Activated CD4-positive, alpha-beta memory T cell treated with anti-CD3 and anti-CD28 coated beads for 36 hours (primary cell): ENCODE measurements at regions of chr9 and their contacts with region 1.

Region 1: GRCh38 chr9:110623462-110624025 is 44.0 kb upstream of the SVEP1 start:
- DNase-seq: no peak
- H3K4me3 Mint-ChIP-seq: no peak overlapping the region
- H3K27ac Mint-ChIP-seq: no peak overlapping the region
- H3K4me1 Mint-ChIP-seq: peaks cover 11% of the 10 kb centered on the region
- H3K27me3 Mint-ChIP-seq: no peaks in the 10 kb centered on the region

Region 2: DNA sequence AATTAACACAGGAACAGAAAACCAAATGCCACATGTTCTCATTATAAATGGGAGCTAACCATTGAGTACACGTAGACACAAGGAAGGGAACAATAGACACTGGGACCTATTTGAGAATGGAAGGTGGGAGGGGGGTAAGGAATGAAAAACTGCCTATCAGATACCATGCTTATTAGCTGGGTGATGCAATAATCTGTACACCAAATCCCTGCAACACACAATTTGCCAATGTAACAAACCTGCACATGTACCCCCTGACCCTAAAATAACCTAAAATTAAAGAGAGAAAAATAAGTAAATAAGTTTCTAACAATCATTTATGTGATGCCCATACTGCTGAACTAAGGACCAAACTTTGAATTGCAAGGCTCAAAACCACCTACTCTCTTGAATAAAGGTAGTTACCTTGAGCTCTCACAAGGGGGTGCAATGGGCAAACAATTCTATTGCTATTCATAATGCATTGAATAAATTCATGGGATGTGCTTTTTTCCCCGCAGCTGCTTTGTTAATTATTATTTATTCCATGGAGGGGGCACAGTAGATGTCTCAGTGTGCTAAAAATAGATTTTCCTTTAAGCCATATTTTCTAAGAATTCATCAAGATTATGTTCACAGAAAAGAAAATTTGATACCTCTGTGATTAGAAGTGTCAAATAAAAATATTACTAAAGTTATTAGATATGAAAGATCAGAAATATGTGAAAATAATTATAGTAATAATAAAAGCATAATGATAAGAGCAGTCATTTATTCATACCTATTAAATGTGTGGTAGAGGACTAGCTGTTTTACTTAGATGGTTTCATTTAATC is 1049.3 kb before region 1 on chr9:
- CTCF ChIA-PET with region 1: no interaction called
- POLR2A ChIA-PET with region 1: no interaction called
- intact Hi-C with region 1: loop called (anchors 10 kb)
- DNase-seq: no peak
- H3K4me3 Mint-ChIP-seq: no peak overlapping the region
- H3K27ac Mint-ChIP-seq: no peak overlapping the region
- H3K4me1 Mint-ChIP-seq: no peaks in the 10 kb centered on the region
- H3K27me3 Mint-ChIP-seq: no peaks in the 10 kb centered on the region

Region 3: GRCh38 chr9:110183208-110184145 is 440.1 kb before region 1 on chr9:
- CTCF ChIA-PET with region 1: interaction called, 33 read pairs
- POLR2A ChIA-PET with region 1: no interaction called
- intact Hi-C with region 1: loop called (anchors 1 kb)
- DNase-seq: peak; percentile 67
- H3K4me3 Mint-ChIP-seq: no peak overlapping the region
- H3K27ac Mint-ChIP-seq: no peak overlapping the region
- H3K4me1 Mint-ChIP-seq: no peaks in the 10 kb centered on the region
- H3K27me3 Mint-ChIP-seq: no peaks in the 10 kb centered on the region

Region 4: DNA sequence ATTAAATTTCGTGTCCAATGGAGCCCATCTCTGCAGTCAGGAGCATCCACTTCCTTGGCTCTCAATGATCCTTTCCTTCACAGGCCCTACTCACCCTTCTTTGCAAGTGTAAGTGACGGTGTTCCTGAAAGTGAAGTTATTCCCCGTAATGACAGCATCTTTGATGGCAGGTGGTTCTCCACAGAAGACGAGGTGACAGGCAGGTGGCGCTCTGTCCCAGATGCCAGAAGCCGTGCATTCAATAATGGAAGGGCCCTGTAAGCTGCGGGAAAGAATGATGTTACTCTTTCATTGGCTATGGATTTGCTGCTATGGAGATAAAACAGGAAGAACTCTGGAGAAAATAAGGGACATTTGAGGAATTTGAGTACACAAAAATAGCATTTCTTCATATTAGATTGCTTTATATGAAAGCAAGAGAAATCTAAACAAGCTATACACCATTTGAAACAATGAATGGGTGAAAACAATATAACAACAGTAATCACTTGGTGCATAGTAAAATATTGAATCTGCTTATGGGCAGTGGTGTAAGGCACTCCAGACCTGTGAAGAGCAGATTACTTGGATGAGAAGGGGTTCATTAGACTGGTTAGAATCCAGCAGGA is 195.9 kb before region 1 on chr9:
- CTCF ChIA-PET with region 1: interaction called, 7 read pairs
- POLR2A ChIA-PET with region 1: no interaction called
- intact Hi-C with region 1: loop called (anchors 5 kb)
- DNase-seq: peak; percentile 46
- H3K4me3 Mint-ChIP-seq: no peak overlapping the region
- H3K27ac Mint-ChIP-seq: no peak overlapping the region
- H3K4me1 Mint-ChIP-seq: no peaks in the 10 kb centered on the region
- H3K27me3 Mint-ChIP-seq: no peaks in the 10 kb centered on the region

Region 5: DNA sequence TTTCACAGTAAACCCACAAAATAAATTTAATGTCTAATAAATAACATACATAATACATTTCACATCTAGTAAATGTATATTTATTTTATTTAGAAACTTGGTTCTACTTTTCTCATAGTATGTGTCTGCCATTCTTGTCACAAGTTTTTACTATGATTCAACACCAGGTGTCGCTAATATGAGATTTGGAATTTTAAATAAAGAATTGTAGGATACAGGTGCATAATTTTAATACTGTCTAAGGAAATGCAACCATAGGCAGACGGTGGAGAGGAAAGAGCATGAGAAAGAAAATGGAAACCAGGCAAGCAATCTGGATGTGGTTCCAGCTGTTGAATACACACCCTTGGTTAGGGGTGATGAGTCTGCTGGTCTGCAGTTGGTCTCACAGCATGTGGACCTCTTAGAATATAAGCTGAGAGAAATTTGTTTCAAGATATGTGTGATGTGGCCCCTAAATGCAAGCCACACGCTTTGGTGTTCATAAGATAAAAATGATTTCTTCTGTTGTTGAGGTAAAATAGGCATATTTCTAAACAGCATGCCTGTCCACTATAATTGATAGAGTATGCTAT is 171.2 kb before region 1 on chr9:
- CTCF ChIA-PET with region 1: no interaction called
- POLR2A ChIA-PET with region 1: no interaction called
- intact Hi-C with region 1: loop called (anchors 1 kb)
- DNase-seq: no peak
- H3K4me3 Mint-ChIP-seq: no peak overlapping the region
- H3K27ac Mint-ChIP-seq: no peak overlapping the region
- H3K4me1 Mint-ChIP-seq: no peaks in the 10 kb centered on the region
- H3K27me3 Mint-ChIP-seq: peaks cover 3% of the 10 kb centered on the region

Region 6: DNA sequence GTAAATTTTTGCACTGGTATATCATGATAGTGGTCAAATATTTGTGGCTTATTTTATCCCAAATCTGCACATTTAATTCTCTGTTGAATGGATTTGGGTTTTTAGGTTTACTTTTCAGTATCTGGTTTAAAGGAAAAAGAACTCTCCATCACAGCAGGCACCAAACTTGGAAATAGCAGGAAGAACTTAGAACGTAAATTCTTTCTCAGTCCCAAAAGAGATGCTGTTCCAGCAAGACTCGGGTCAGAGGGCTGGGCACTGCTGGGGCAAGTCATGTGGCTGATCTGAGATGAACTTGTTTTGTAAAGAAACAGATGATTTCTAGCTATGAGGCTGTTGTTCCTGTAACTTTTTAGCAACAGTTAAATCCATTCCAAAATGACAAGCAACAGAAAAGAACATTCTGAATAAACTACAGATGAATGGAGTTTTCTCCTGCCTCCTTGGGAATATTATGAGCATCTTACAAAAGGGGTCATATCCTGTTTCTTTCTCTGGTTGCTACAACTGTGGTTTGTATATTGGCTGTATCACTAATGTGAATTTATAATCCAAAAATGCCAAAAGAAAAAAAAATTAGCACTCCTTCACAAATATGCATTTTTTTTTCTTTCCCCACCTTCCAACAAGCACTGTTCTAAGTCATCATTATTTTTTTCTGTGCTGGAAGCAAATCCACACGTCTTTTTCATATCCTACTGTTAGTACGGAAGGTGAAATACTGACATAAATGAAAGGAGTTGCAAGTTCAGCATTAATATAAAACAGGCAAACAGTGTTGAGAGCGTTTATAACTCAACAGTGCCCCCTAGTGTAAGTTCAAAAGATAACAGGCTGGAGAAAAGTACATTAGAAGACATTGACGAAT is 675.4 kb after region 1 on chr9:
- CTCF ChIA-PET with region 1: interaction called, 3 read pairs
- POLR2A ChIA-PET with region 1: no interaction called
- intact Hi-C with region 1: loop called (anchors 5 kb)
- DNase-seq: no peak
- H3K4me3 Mint-ChIP-seq: no peak overlapping the region
- H3K27ac Mint-ChIP-seq: no peak overlapping the region
- H3K4me1 Mint-ChIP-seq: no peaks in the 10 kb centered on the region
- H3K27me3 Mint-ChIP-seq: peaks cover 3% of the 10 kb centered on the region